ENCODE measurements at regions of chr9 and their contacts with region 1.

Region 1: GRCh38 chr9:128159784-128160602 is at the start of gene BBLN:
- DNase-seq: peak; percentile 78 to 94 (median 87)
- ATAC-seq: peak; percentile 94
- H3K4me3 ChIP-seq: peak within 1 kb of the TSS; percentile 97
- H3K4me3 Mint-ChIP-seq: peak within 1 kb of the TSS; percentile 79 to 90 (median 82)
- H3K27ac ChIP-seq: peak within 1 kb of the TSS; percentile 78
- H3K27ac Mint-ChIP-seq: peak within 1 kb of the TSS; percentile 84 to 95 (median 93)
- H3K4me1 ChIP-seq: peaks cover 11 to 12% of the 10 kb centered on the region in 2 donors
- H3K4me1 Mint-ChIP-seq: peaks cover 0 to 28% (median 21%) of the 10 kb centered on the region in 7 donors
- H3K27me3 ChIP-seq: no peaks in the 10 kb centered on the region
- H3K27me3 Mint-ChIP-seq: no peaks in the 10 kb centered on the region
- total RNA-seq, gene BBLN: 42.7 to 87.8 (median 48.0) TPM

Region 2: GRCh38 chr9:128117613-128118471 is 42.2 kb before region 1 on chr9:
- CTCF ChIA-PET with region 1: no interaction called
- POLR2A ChIA-PET with region 1: interaction called, 4 read pairs
- intact Hi-C with region 1: loop called in 1 of 2 experiments (anchors 5 kb)
- DNase-seq: peak; percentile 82 to 99 (median 92)
- ATAC-seq: peak; percentile 97
- H3K4me3 ChIP-seq: no peak overlapping the region
- H3K4me3 Mint-ChIP-seq: peak overlapping the region in 4 of 10 donors; percentile 3 to 59 (median 36)
- H3K27ac ChIP-seq: no peak overlapping the region
- H3K27ac Mint-ChIP-seq: peak overlapping the region in 8 of 9 donors; percentile 11 to 88 (median 60)
- H3K4me1 ChIP-seq: peaks cover 0 to 7% of the 10 kb centered on the region in 2 donors
- H3K4me1 Mint-ChIP-seq: peaks cover 6 to 13% (median 7%) of the 10 kb centered on the region in 7 donors
- H3K27me3 ChIP-seq: no peaks in the 10 kb centered on the region
- H3K27me3 Mint-ChIP-seq: no peaks in the 10 kb centered on the region

Region 3: DNA sequence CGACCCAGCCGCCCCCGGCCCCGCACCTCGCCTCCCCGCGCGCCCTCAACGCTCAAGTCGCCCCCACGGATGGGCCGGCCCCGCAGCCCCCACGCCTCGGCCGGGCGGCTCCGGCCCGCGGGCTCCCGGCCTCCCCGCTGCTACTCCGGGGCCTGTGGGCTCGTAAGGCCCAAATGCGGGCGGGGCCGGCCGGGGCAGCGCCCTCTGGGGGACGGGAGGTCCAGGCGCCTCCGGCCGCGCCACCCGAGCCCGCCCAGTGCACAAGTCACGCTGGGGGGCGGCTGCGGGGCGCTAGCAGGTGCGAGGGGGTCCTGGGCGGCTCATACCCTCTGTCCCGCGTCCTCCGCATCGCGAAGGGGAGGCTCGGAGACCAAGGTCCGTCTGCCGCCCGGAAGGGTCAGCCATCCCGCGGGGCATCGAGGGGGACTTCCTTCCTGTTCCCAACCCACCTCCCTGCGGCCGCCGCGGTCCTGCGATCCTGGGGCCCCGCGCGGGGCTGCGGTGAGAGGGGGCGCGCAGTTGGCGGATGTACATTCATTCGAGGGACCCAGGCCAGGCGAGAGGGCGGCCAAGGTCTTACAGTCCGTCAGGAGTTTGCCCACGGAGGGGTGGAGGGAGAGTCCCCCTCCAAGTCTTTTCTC is 31.5 kb after region 1 on chr9 and contains the start of gene CIZ1:
- CTCF ChIA-PET with region 1: interaction called, 3 read pairs
- POLR2A ChIA-PET with region 1: interaction called, 9 read pairs
- intact Hi-C with region 1: loop called (anchors 1 kb)
- DNase-seq: peak; percentile 51 to 86 (median 69)
- ATAC-seq: peak; percentile 95
- H3K4me3 ChIP-seq: peak within 1 kb of the TSS; percentile 76
- H3K4me3 Mint-ChIP-seq: peak within 1 kb of the TSS; percentile 92 to 99 (median 96)
- H3K27ac ChIP-seq: peak within 1 kb of the TSS; percentile 89
- H3K27ac Mint-ChIP-seq: peak within 1 kb of the TSS; percentile 84 to 93 (median 90)
- H3K4me1 ChIP-seq: peaks cover 12 to 16% of the 10 kb centered on the region in 2 donors
- H3K4me1 Mint-ChIP-seq: peaks cover 13 to 39% (median 31%) of the 10 kb centered on the region in 7 donors
- H3K27me3 ChIP-seq: no peaks in the 10 kb centered on the region
- H3K27me3 Mint-ChIP-seq: peaks cover 0 to 13% (median 0%) of the 10 kb centered on the region in 5 donors
- total RNA-seq, gene CIZ1: 110 to 163 (median 142) TPM

Region 4: GRCh38 chr9:128203024-128203706 is 43.2 kb after region 1 on chr9 and contains the start of gene DNM1:
- CTCF ChIA-PET with region 1: no interaction called
- POLR2A ChIA-PET with region 1: interaction called, 3 read pairs
- intact Hi-C with region 1: loop called (anchors 1 kb)
- DNase-seq: peak; percentile 50 to 89 (median 80)
- ATAC-seq: peak; percentile 99
- H3K4me3 ChIP-seq: peak within 1 kb of the TSS; percentile 51
- H3K4me3 Mint-ChIP-seq: peak within 1 kb of the TSS; percentile 63 to 83 (median 76)
- H3K27ac ChIP-seq: no peak within 1 kb of the TSS
- H3K27ac Mint-ChIP-seq: peak within 1 kb of the TSS in 7 of 9 donors; percentile 3 to 84 (median 73)
- H3K4me1 ChIP-seq: peaks cover 4 to 8% of the 10 kb centered on the region in 2 donors
- H3K4me1 Mint-ChIP-seq: peaks cover 6 to 14% (median 8%) of the 10 kb centered on the region in 7 donors
- H3K27me3 ChIP-seq: peaks cover 0 to 5% of the 10 kb centered on the region in 2 donors
- H3K27me3 Mint-ChIP-seq: peaks cover 0 to 33% (median 6%) of the 10 kb centered on the region in 5 donors
- total RNA-seq, gene DNM1: 0.24 to 2.0 (median 0.94) TPM

Region 5: DNA sequence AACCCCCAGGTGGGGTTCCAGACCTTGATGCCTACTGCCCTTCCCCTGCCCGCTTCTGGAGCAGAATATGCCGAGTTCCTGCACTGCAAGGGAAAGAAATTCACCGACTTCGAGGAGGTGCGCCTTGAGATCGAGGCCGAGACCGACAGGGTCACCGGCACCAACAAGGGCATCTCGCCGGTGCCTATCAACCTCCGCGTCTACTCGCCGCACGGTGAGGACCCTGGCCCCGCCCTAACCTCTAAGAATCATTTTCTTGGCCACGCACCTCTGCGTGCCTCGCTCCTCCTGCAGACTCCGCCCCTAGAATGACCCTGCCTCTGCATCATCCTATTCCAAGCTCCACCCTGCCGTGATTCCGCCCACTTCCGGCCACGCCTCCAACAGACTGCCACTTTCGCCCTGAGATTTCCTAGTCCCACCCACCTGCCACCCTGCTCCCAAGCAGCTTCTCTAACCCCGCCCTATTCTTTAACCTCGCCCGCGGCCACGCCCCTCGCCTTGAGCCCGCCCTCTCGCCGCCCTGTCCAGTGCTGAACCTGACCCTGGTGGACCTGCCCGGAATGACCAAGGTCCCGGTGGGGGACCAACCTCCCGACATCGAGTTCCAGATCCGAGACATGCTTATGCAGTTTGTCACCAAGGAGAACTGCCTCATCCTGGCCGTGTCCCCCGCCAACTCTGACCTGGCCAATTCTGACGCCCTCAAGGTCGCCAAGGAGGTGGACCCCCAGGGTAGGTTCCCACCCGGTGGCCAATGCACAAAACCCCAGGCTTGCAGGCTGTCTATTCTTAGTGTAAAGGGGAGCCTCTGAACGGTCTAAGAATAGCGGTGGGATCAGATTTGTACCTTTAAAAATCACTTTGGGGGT is 58.8 kb after region 1 on chr9:
- CTCF ChIA-PET with region 1: no interaction called
- POLR2A ChIA-PET with region 1: interaction called, 3 read pairs
- intact Hi-C with region 1: loop called (anchors 1 kb)
- DNase-seq: peak; percentile 70 to 93 (median 89)
- ATAC-seq: peak; percentile 98
- H3K4me3 ChIP-seq: peak overlapping the region; percentile 62
- H3K4me3 Mint-ChIP-seq: peak overlapping the region; percentile 80 to 93 (median 83)
- H3K27ac ChIP-seq: peak overlapping the region; percentile 47
- H3K27ac Mint-ChIP-seq: peak overlapping the region; percentile 18 to 93 (median 65)
- H3K4me1 ChIP-seq: peaks cover 5 to 7% of the 10 kb centered on the region in 2 donors
- H3K4me1 Mint-ChIP-seq: peaks cover 9 to 13% (median 12%) of the 10 kb centered on the region in 7 donors
- H3K27me3 ChIP-seq: no peaks in the 10 kb centered on the region
- H3K27me3 Mint-ChIP-seq: peaks cover 0 to 8% (median 0%) of the 10 kb centered on the region in 5 donors

Region 6: GRCh38 chr9:128249908-128250838 is 90.2 kb after region 1 on chr9:
- CTCF ChIA-PET with region 1: no interaction called
- POLR2A ChIA-PET with region 1: no interaction called
- intact Hi-C with region 1: loop called (anchors 1 kb)
- DNase-seq: peak; percentile 96 to 100 (median 98)
- ATAC-seq: peak; percentile 98
- H3K4me3 ChIP-seq: peak overlapping the region; percentile 83
- H3K4me3 Mint-ChIP-seq: peak overlapping the region; percentile 79 to 93 (median 88)
- H3K27ac ChIP-seq: peak overlapping the region; percentile 72
- H3K27ac Mint-ChIP-seq: peak overlapping the region; percentile 60 to 97 (median 95)
- H3K4me1 ChIP-seq: peaks cover 7 to 9% of the 10 kb centered on the region in 2 donors
- H3K4me1 Mint-ChIP-seq: peaks cover 7 to 28% (median 17%) of the 10 kb centered on the region in 7 donors
- H3K27me3 ChIP-seq: no peaks in the 10 kb centered on the region
- H3K27me3 Mint-ChIP-seq: peaks cover 0 to 39% (median 6%) of the 10 kb centered on the region in 5 donors

Measured in naive thymus-derived CD4-positive, alpha-beta T cell (primary cell).